ENCODE measurements at regions of chr1 and their contacts with region 1.

Region 1: GRCh38 chr1:181088079-181089016 is at the start of gene IER5:
- DNase-seq: peak; percentile 93 to 95 (median 95)
- H3K4me3 ChIP-seq: peak within 1 kb of the TSS; percentile 68 to 69
- H3K4me3 Mint-ChIP-seq: peak within 1 kb of the TSS; percentile 98 to 100 (median 99)
- H3K27ac ChIP-seq: peak within 1 kb of the TSS; percentile 100
- H3K27ac Mint-ChIP-seq: peak within 1 kb of the TSS; percentile 96 to 99 (median 99)
- H3K4me1 ChIP-seq: peaks cover 40% of the 10 kb centered on the region
- H3K4me1 Mint-ChIP-seq: peaks cover 29 to 63% (median 40%) of the 10 kb centered on the region in 4 donors
- H3K27me3 ChIP-seq: no peaks in the 10 kb centered on the region
- H3K27me3 Mint-ChIP-seq: no peaks in the 10 kb centered on the region
- total RNA-seq, gene IER5: 28.0 to 29.3 TPM

Region 2: GRCh38 chr1:180631766-180632325 is 456.5 kb before region 1 on chr1 and contains the start of gene XPR1:
- CTCF ChIA-PET with region 1: no interaction called
- POLR2A ChIA-PET with region 1: interaction called, 3 read pairs
- intact Hi-C with region 1: loop called (anchors 5 kb)
- DNase-seq: peak; percentile 93 to 98 (median 96)
- H3K4me3 ChIP-seq: peak within 1 kb of the TSS; percentile 74 to 94
- H3K4me3 Mint-ChIP-seq: peak within 1 kb of the TSS in 4 of 8 donors; percentile 82 to 92 (median 89)
- H3K27ac ChIP-seq: peak within 1 kb of the TSS; percentile 91
- H3K27ac Mint-ChIP-seq: peak within 1 kb of the TSS in 6 of 7 donors; percentile 75 to 95 (median 93)
- H3K4me1 ChIP-seq: peaks cover 33% of the 10 kb centered on the region
- H3K4me1 Mint-ChIP-seq: peaks cover 7 to 13% (median 9%) of the 10 kb centered on the region in 4 donors
- H3K27me3 ChIP-seq: no peaks in the 10 kb centered on the region
- H3K27me3 Mint-ChIP-seq: peaks cover 0 to 5% of the 10 kb centered on the region in 2 donors
- total RNA-seq, gene XPR1: 16.8 to 17.0 TPM

Region 3: GRCh38 chr1:180751921-180752320 is 336.4 kb before region 1 on chr1:
- CTCF ChIA-PET with region 1: no interaction called
- POLR2A ChIA-PET with region 1: no interaction called
- intact Hi-C with region 1: no loop called
- DNase-seq: no peak
- H3K4me3 ChIP-seq: no peak overlapping the region
- H3K4me3 Mint-ChIP-seq: peak overlapping the region in 1 of 8 donors; percentile 15
- H3K27ac ChIP-seq: no peak overlapping the region
- H3K27ac Mint-ChIP-seq: no peak overlapping the region
- H3K4me1 ChIP-seq: no peaks in the 10 kb centered on the region
- H3K4me1 Mint-ChIP-seq: peaks cover 0 to 6% (median 4%) of the 10 kb centered on the region in 4 donors
- H3K27me3 ChIP-seq: no peaks in the 10 kb centered on the region
- H3K27me3 Mint-ChIP-seq: no peaks in the 10 kb centered on the region

Region 4: DNA sequence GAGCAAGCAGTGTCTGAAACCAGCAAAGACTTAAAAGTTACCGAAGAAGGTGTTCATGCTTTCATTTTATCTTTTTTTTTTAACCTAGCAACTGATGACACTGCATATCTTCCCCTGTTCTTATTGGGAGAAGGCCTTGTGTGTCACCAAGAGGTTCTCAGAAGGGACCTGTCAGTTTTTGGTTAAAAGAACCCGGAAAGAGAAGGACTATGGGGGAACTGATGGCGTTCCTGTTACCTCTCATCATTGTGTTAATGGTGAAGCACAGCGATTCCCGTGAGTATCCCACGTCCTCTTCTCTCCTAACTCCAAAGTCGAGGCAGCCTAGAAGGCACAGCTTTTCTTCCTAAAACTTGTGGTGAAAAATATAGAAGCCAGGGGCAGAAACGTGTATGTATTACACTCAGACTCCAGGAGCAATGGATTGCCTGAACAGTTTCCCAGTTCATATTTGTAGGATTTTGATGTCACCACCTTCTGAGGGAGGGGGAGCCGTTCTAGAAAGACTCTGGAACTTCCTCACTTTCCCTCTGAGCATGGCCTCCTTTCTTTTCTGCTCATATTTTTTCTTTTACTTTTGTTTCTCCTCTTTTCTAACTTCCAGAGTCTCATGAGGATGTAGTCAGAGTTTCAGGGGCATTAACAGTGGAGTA is 54.4 kb before region 1 on chr1 and contains the start of gene MR1:
- CTCF ChIA-PET with region 1: interaction called, 13 read pairs
- POLR2A ChIA-PET with region 1: interaction called, 31 read pairs
- intact Hi-C with region 1: loop called (anchors 1 kb)
- DNase-seq: peak; percentile 72 to 91 (median 87)
- H3K4me3 ChIP-seq: peak within 1 kb of the TSS; percentile 63 to 72
- H3K4me3 Mint-ChIP-seq: peak within 1 kb of the TSS; percentile 93 to 99 (median 98)
- H3K27ac ChIP-seq: peak within 1 kb of the TSS; percentile 92
- H3K27ac Mint-ChIP-seq: peak within 1 kb of the TSS; percentile 95 to 100 (median 99)
- H3K4me1 ChIP-seq: peaks cover 56% of the 10 kb centered on the region
- H3K4me1 Mint-ChIP-seq: peaks cover 47 to 64% (median 54%) of the 10 kb centered on the region in 4 donors
- H3K27me3 ChIP-seq: no peaks in the 10 kb centered on the region
- H3K27me3 Mint-ChIP-seq: no peaks in the 10 kb centered on the region
- total RNA-seq, gene MR1: 31.8 to 33.2 TPM

Region 5: DNA sequence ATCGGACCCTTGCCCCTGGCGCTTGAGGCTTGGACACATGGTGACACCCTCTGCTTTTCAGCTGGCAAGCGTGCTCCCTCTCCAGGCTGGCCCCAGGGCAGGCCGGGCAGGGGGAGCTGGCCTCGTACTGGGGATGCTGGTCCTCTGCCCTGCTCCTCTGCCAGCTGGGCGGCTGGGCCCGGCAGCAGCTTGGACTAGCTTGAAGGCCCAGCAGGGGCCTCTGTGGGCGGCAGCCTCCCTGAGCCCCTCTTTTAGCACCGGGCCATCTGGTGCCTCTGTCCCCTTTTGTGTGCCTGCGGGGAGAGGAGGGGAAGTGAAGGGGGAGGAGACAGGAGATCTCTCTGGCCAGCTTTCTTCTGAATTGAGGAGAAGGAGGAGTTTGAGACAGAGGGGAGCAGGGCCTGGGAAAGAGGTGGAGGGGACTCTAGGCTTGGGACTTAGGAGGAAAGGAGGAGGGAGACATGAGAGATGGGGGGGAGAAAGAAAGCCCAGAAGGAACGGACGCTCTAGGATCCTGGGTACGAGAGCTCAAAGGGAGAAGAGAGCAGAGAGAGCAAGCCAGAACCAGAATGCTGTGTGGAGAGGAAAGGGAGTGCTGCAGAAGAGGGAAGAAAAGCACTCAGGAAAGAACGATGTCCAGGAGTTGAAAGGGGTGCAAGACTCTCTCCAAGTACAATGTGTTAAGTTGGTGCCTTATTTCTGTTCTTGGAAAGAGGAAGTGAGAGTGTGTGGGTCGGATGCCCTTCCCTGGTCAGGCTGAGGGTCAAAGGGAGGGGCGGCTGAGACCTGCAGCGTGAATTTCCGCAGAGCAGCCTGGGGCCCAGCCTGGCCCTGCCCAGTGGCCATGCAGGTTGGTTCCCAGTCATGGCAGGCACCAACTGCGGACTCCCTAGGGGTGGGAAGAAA is 40.5 kb after region 1 on chr1:
- CTCF ChIA-PET with region 1: no interaction called
- POLR2A ChIA-PET with region 1: interaction called, 13 read pairs
- intact Hi-C with region 1: no loop called
- DNase-seq: no peak
- H3K4me3 ChIP-seq: no peak overlapping the region
- H3K4me3 Mint-ChIP-seq: no peak overlapping the region
- H3K27ac ChIP-seq: no peak overlapping the region
- H3K27ac Mint-ChIP-seq: no peak overlapping the region
- H3K4me1 ChIP-seq: peaks cover 2% of the 10 kb centered on the region
- H3K4me1 Mint-ChIP-seq: peaks cover 0 to 6% (median 3%) of the 10 kb centered on the region in 4 donors
- H3K27me3 ChIP-seq: no peaks in the 10 kb centered on the region
- H3K27me3 Mint-ChIP-seq: peaks cover 0 to 2% of the 10 kb centered on the region in 2 donors

Region 6: DNA sequence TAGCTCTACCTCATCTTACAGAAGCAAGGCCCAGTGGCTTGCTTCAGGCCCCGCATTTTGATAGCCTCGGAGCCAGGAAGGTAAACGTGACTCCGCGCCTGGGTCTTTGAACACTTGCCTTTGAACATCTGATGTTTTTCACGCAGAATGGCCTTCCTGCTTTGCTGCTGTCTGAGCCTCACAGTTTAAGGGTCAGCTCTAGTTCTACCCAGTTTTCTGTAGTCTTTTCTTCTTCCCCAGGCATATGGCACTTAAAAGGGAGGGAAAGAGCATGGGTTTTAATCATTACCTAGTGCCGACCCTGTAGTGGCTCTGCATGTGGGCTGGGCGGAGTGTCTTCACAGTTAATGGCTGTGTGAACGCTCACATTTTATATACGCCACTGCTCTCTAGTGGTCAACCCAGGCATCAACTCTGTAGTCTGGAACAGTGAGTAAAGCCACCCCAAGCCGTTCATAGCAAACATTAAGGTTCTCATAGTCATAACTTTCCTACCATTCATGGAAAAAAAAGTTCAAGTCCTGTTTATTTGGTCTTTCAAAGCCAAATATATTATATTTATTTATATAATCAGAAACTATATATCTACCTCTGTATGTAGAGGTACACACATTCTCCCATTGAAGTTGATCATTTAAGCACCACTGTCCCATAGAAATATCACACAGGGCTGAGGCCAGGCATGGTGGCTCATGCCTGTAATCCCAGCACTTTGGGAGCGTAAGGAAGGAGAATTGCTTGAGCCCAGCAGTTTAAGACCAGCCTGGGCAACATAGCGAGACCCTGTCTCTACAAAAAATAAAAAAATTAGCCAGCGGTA is 78.2 kb after region 1 on chr1:
- CTCF ChIA-PET with region 1: interaction called, 68 read pairs
- POLR2A ChIA-PET with region 1: interaction called, 73 read pairs
- intact Hi-C with region 1: loop called (anchors 1 kb)
- DNase-seq: peak; percentile 72 to 78 (median 76)
- H3K4me3 ChIP-seq: no peak overlapping the region
- H3K4me3 Mint-ChIP-seq: peak overlapping the region in 7 of 8 donors; percentile 41 to 84 (median 72)
- H3K27ac ChIP-seq: no peak overlapping the region
- H3K27ac Mint-ChIP-seq: peak overlapping the region; percentile 57 to 88 (median 76)
- H3K4me1 ChIP-seq: peaks cover 6% of the 10 kb centered on the region
- H3K4me1 Mint-ChIP-seq: peaks cover 5 to 8% (median 6%) of the 10 kb centered on the region in 4 donors
- H3K27me3 ChIP-seq: no peaks in the 10 kb centered on the region
- H3K27me3 Mint-ChIP-seq: no peaks in the 10 kb centered on the region

Region 7: DNA sequence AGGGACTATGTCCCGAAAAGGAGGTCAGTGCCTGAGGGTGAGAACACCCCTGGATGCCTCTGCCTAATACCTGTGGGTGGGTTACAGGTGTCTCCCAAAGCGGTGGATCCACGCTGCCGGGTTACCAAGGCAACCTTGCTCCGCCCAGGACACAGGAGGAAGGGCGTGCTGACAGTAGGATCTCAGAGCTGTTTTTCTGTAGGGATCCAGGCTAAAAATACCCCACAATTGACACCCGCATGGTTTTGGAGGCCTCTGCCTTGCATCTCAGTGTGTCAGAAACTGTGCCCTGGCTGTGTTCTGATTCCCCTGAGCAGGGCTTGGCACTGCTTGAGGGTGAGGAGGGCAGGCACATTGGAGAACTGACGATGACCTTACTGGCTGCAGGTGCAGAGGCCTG is 118.2 kb after region 1 on chr1:
- CTCF ChIA-PET with region 1: no interaction called
- POLR2A ChIA-PET with region 1: no interaction called
- intact Hi-C with region 1: no loop called
- DNase-seq: no peak
- H3K4me3 ChIP-seq: no peak overlapping the region
- H3K4me3 Mint-ChIP-seq: no peak overlapping the region
- H3K27ac ChIP-seq: no peak overlapping the region
- H3K27ac Mint-ChIP-seq: no peak overlapping the region
- H3K4me1 ChIP-seq: no peaks in the 10 kb centered on the region
- H3K4me1 Mint-ChIP-seq: no peaks in the 10 kb centered on the region
- H3K27me3 ChIP-seq: no peaks in the 10 kb centered on the region
- H3K27me3 Mint-ChIP-seq: peaks cover 3 to 6% of the 10 kb centered on the region in 2 donors